ENCODE measurements at regions of chr18 and their contacts with region 1.

Region 1: GRCh38 chr18:59837586-59837985 is 62.2 kb upstream of the PMAIP1 start:
- ATAC-seq: peak in 3 of 8 experiments; percentile 84 to 88 (median 85)
- H3K4me3 ChIP-seq: no peak overlapping the region
- H3K27ac ChIP-seq: no peak overlapping the region
- H3K4me1 ChIP-seq: no peaks in the 10 kb centered on the region

Region 2: GRCh38 chr18:59459369-59460079 is 378.1 kb before region 1 on chr18:
- in situ Hi-C with region 1: loop called in 1 of 9 experiments (anchors 25 kb)
- ATAC-seq: peak in 4 of 8 experiments; percentile 39 to 63 (median 44)
- H3K4me3 ChIP-seq: no peak overlapping the region
- H3K27ac ChIP-seq: no peak overlapping the region
- H3K4me1 ChIP-seq: peaks cover 12 to 17% of the 10 kb centered on the region in 2 donors

Region 3: DNA sequence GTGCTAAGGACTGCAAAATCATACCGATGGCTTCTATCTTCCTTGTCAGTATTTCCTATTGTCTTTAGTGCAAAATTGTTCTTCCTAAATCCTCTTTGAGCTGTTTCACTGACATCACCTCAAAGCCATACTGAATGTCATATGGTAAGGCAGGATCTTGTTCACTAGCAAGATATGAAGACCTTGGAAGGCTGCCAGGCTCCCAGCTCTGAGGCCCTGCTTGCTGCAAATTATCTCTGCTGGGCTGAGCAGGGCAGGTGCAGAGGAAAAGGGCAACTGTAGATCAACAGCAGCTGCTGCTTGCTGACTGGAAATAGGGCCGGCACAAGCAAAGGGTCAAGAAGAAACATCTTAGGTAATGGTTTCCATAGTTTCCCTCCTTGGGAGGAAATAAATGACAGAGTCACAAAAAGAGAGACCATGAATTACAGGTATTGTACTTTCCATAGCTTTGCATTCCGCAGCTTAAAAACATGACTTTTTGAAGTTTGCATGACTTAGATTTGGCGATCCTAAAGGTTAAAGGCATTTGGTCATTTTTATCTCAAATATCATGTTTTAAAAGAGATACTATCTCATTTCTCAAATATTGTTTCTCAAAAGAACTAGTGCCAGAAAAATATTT is 120.5 kb after region 1 on chr18:
- in situ Hi-C with region 1: loop called in 1 of 9 experiments (anchors 25 kb)
- ATAC-seq: peak; percentile 39 to 100 (median 98)
- H3K4me3 ChIP-seq: no peak overlapping the region
- H3K27ac ChIP-seq: no peak overlapping the region
- H3K4me1 ChIP-seq: peaks cover 3 to 9% of the 10 kb centered on the region in 2 donors

Region 4: DNA sequence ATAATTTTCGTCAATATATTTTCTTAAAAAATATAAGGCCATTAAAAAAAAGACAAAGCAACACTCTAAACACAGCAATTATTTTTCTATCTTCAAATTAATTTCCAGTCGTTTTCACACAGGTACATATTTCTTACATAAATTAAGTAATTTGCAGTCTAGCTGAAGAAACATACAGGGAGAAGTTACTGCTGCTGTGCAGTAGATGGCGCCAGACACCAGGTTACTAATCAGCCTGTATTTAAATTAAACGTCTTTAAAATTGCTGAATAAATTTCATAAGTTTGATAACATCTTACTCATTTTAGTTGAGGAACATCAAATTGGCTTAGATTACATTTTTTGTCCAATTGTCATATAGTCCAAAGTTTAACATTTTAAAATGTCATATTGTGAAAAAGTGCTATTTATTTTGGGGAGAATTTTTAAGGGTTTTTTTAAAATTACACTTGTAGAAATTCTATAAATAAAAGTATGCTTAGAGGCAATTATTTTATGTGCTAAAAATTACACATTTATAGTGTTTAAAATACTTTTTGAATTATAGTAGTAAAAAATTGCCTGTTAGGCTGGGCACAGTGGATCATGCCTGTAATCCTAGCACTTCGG is 150.6 kb after region 1 on chr18:
- in situ Hi-C with region 1: loop called in 1 of 9 experiments (anchors 25 kb)
- ATAC-seq: peak in 1 of 8 experiments; percentile 54
- H3K4me3 ChIP-seq: no peak overlapping the region
- H3K27ac ChIP-seq: no peak overlapping the region
- H3K4me1 ChIP-seq: no peaks in the 10 kb centered on the region

Region 5: DNA sequence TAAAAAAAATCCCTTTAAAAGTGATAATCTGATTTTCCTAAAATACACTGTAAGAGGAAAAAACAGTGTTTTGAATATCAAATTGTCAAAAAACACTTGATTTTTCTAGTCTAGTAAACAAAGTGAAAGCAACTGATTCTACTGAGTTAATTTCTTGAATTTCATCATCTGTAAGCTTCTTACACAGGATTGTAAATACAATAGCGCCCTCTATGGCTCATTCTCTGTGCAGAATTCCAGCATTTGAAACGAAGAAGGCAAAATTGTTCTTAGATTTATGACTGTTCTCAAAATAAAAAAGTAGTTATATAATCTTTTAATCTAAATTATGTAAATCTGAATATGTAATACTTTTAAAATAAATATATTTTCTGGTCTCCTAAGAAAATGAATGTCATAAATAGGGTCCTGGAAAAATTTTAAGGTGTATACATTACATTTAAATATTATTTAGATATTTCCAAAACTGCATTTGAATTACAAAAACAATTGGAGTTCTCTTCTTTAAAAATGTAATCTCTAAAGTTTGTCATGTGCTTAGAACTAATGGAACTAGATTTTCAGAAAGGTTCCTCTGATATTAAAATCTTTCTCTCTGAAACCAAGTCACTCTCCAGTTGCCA is 711.9 kb after region 1 on chr18:
- in situ Hi-C with region 1: loop called in 2 of 9 experiments (anchors 25 kb)
- ATAC-seq: peak in 3 of 8 experiments; percentile 33 to 49 (median 34)
- H3K4me3 ChIP-seq: no peak overlapping the region
- H3K27ac ChIP-seq: no peak overlapping the region
- H3K4me1 ChIP-seq: no peaks in the 10 kb centered on the region